CD4-positive, alpha-beta memory T cell (primary cell): ENCODE measurements at regions of chr14 and their contacts with region 1.

Region 1: DNA sequence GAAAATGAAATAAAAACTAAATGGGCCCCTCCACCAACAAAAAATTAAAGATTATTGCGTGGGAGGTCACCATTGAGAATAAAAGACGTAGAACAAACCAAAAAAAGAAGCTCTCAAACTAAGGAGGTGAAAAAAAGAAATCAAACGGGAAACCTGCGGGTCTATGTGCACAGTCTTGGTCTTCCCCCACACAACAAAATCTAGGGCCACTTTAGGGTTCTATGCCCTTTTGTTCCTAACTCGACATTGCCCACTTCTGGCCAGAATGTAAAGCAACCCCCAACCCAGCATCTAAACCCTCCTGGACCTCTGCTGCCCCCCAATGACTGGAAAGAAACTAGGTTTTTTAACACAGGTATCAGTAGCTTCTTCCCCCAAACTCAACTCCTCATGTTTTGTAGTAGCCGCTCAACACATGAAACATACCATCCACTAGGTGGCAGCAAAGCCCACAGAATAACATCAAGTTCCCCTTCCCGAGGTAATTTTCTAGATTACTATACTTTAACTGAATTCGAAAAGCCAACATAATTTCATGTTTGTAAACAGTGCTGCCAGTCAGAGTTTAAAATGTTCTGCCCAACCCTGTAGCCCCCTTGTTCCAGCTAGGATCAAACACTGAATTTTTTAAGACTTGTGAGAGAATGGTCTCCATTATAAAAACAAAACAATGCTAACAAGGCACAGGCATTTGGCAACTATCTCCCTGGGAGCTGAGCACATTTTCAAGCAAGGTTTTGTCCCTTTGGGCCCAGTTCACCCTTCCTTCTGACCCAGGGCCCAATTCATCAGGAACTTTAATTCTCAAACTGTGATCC is 18.7 kb downstream of the DAD1 start:
- DNase-seq: peak; percentile 94 to 97 (median 96)
- H3K4me3 ChIP-seq: peak overlapping the region; percentile 6 to 41
- H3K4me3 Mint-ChIP-seq: peak overlapping the region; percentile 54 to 85 (median 80)
- H3K27ac ChIP-seq: peak overlapping the region; percentile 69
- H3K27ac Mint-ChIP-seq: peak overlapping the region; percentile 95 to 100 (median 98)
- H3K4me1 ChIP-seq: peaks cover 52% of the 10 kb centered on the region
- H3K4me1 Mint-ChIP-seq: peaks cover 38 to 57% (median 46%) of the 10 kb centered on the region in 4 donors
- H3K27me3 ChIP-seq: no peaks in the 10 kb centered on the region
- H3K27me3 Mint-ChIP-seq: no peaks in the 10 kb centered on the region

Region 2: DNA sequence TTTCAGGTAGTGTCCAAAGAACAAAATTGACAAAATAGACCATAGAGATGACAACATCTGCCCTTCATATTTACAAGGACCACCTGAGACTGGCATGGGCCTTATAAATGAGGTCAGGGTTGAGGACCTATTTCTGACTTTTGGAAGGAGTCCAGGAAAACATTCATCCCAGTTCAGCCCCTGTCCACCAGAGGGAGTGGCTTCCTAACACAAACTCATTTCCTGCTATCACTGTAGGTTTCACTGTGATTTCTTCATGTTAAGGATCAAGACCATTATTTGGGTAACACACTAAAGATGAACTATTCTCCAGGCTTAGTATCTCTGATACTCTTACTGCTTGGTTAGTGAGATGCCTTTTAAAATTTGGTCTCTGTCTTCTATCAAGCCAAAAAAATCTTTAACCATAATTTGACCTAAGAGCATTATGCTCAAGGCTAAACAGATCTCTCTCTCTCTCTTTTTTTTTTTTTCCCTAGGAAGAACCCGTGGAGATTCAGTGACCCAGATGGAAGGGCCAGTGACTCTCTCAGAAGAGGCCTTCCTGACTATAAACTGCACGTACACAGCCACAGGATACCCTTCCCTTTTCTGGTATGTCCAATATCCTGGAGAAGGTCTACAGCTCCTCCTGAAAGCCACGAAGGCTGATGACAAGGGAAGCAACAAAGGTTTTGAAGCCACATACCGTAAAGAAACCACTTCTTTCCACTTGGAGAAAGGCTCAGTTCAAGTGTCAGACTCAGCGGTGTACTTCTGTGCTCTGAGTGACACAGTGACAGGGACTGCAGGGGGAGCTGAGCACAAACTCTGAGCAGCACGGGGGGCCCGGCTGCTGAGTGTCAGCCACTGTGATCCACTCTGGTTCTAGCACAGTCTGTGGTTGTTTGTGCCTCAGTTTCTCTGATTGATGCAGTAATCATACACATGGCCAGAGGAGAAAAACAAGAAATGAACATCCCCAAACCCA is 629.2 kb before region 1 on chr14:
- CTCF ChIA-PET with region 1: interaction called, 5 read pairs
- POLR2A ChIA-PET with region 1: no interaction called
- intact Hi-C with region 1: loop called (anchors 1 kb)
- DNase-seq: peak; percentile 44 to 53 (median 47)
- H3K4me3 ChIP-seq: no peak overlapping the region
- H3K4me3 Mint-ChIP-seq: peak overlapping the region; percentile 65 to 86 (median 81)
- H3K27ac ChIP-seq: peak overlapping the region; percentile 26
- H3K27ac Mint-ChIP-seq: peak overlapping the region; percentile 31 to 88 (median 79)
- H3K4me1 ChIP-seq: peaks cover 13% of the 10 kb centered on the region
- H3K4me1 Mint-ChIP-seq: peaks cover 4 to 20% (median 15%) of the 10 kb centered on the region in 4 donors
- H3K27me3 ChIP-seq: no peaks in the 10 kb centered on the region
- H3K27me3 Mint-ChIP-seq: peaks cover 0 to 9% of the 10 kb centered on the region in 2 donors

Region 3: DNA sequence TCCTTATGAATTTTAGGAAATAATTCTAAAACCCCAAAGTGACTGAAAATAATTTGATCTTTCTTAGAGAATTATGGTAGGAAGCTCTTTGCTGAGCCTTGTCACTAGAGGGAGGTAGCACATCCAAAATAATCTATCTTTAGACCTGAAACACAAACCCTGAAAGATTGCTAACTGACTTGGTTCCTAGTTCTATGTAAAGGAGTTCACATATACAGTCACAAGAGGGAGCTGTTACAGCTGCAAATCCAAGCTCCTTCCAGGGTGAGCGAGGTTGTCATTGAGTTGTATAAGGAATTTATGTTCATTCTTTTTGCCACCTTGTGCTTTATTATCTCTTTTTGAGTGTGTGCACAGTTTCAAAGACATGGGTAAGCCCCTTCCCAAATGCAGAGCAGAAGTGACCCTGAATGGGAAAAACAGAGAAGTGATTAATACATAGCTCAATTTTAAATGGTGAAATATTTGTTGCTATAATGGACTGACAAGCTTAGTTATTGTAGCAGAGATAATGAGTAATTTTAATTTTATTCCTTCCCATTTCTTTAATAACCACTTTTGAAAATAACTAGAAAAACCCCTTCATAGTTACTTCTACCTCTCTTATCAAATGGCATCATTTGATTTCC is 369.2 kb before region 1 on chr14:
- CTCF ChIA-PET with region 1: interaction called, 3 read pairs
- POLR2A ChIA-PET with region 1: interaction called, 7 read pairs
- intact Hi-C with region 1: loop called (anchors 1 kb)
- DNase-seq: peak in 4 of 5 donors; percentile 28 to 43 (median 34)
- H3K4me3 ChIP-seq: no peak overlapping the region
- H3K4me3 Mint-ChIP-seq: peak overlapping the region in 2 of 8 donors; percentile 39 to 58
- H3K27ac ChIP-seq: no peak overlapping the region
- H3K27ac Mint-ChIP-seq: peak overlapping the region in 1 of 7 donors; percentile 52
- H3K4me1 ChIP-seq: no peaks in the 10 kb centered on the region
- H3K4me1 Mint-ChIP-seq: peaks cover 0 to 4% (median 1%) of the 10 kb centered on the region in 4 donors
- H3K27me3 ChIP-seq: no peaks in the 10 kb centered on the region
- H3K27me3 Mint-ChIP-seq: no peaks in the 10 kb centered on the region

Region 4: GRCh38 chr14:22536853-22537338 is 33.4 kb before region 1 on chr14:
- CTCF ChIA-PET with region 1: interaction called, 30 read pairs
- POLR2A ChIA-PET with region 1: interaction called, 186 read pairs
- intact Hi-C with region 1: no loop called
- DNase-seq: peak in 4 of 5 donors; percentile 54 to 97 (median 62)
- H3K4me3 ChIP-seq: peak overlapping the region; percentile 13 to 46
- H3K4me3 Mint-ChIP-seq: peak overlapping the region; percentile 69 to 91 (median 85)
- H3K27ac ChIP-seq: peak overlapping the region; percentile 72
- H3K27ac Mint-ChIP-seq: peak overlapping the region; percentile 92 to 100 (median 98)
- H3K4me1 ChIP-seq: peaks cover 99% of the 10 kb centered on the region
- H3K4me1 Mint-ChIP-seq: peaks cover 86 to 100% (median 91%) of the 10 kb centered on the region in 4 donors
- H3K27me3 ChIP-seq: no peaks in the 10 kb centered on the region
- H3K27me3 Mint-ChIP-seq: no peaks in the 10 kb centered on the region

Region 5: DNA sequence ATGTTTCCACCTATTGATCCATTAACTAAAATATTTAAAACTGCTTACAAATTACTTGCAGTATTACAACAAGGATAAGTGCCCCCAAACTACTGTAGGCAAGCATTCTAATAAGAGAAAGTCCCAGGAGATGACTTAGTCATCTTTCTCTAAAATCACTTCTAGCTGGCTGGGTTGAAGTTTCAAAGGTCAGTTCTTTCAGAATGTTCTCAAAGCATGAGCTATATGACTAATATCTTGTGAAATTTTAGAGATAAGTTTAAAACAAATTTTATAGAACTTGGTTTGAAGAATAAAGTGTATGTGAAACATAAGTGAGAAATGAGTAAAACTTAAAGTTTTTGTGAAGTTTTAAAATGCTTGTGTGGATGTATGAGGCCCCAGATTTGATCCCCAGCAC is 98.1 kb after region 1 on chr14:
- CTCF ChIA-PET with region 1: no interaction called
- POLR2A ChIA-PET with region 1: no interaction called
- intact Hi-C with region 1: no loop called
- DNase-seq: no peak
- H3K4me3 ChIP-seq: no peak overlapping the region
- H3K4me3 Mint-ChIP-seq: no peak overlapping the region
- H3K27ac ChIP-seq: no peak overlapping the region
- H3K27ac Mint-ChIP-seq: no peak overlapping the region
- H3K4me1 ChIP-seq: no peaks in the 10 kb centered on the region
- H3K4me1 Mint-ChIP-seq: no peaks in the 10 kb centered on the region
- H3K27me3 ChIP-seq: no peaks in the 10 kb centered on the region
- H3K27me3 Mint-ChIP-seq: no peaks in the 10 kb centered on the region

Region 6: DNA sequence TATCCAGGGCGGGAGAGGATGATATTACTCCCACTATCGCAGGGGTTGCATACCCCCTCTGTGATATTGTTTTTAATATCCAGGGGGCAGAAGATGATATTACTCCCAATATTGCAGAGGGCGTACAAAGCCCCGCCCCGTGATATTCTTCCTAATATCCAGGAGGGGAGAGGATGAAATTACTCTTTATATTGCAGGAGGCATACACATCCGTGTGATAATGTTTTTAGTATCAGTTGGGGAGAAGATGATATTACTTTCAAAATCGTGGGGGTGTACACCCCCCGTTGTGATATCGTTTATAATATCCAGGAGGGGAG is 143.2 kb after region 1 on chr14:
- CTCF ChIA-PET with region 1: interaction called, 7 read pairs
- POLR2A ChIA-PET with region 1: no interaction called
- intact Hi-C with region 1: loop called (anchors 1 kb)
- DNase-seq: no peak
- H3K4me3 ChIP-seq: peak overlapping the region in 1 of 2 donors; percentile 28
- H3K4me3 Mint-ChIP-seq: peak overlapping the region; percentile 81 to 92 (median 86)
- H3K27ac ChIP-seq: no peak overlapping the region
- H3K27ac Mint-ChIP-seq: peak overlapping the region in 3 of 7 donors; percentile 48 to 94 (median 81)
- H3K4me1 ChIP-seq: no peaks in the 10 kb centered on the region
- H3K4me1 Mint-ChIP-seq: peaks cover 5 to 13% (median 10%) of the 10 kb centered on the region in 4 donors
- H3K27me3 ChIP-seq: no peaks in the 10 kb centered on the region
- H3K27me3 Mint-ChIP-seq: peaks cover 13 to 31% of the 10 kb centered on the region in 2 donors

Region 7: DNA sequence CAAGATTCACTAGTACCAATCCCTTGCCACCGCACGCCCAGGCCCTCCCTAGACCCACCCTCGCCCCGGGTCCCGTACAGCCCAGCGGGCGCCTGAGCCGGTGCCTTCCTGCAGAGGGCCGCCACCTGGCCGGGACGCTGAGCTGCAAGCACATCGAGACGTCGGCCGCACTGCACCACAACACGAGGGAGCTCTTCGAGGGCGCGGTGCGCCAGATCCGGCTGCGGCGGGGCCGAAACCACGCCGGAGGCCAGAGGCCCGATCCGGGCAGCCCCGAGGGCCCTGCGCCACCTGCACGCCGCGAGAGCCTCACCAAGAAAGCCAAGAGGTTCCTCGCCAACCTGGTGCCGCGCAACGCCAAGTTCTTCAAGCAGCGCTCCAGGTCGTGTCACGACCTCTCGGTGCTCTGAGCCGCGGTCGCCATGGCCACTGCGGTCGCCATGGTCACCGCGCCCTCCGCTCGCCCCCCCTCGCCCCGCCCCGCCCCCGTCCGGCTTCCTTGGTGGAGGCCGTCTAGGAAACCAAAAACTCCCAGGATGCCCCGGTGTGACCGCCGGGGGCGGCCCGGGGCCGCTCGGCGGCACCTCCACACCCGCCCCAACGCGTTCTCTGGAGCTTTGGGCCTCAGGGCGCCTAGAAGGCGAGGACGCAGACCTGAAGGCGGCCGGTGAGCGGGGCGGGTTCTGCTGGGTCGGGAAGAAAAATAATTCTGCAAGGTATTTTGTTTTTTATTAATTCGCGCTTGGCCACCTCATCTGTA is 316.3 kb after region 1 on chr14:
- CTCF ChIA-PET with region 1: interaction called, 11 read pairs
- POLR2A ChIA-PET with region 1: interaction called, 8 read pairs
- intact Hi-C with region 1: no loop called
- DNase-seq: peak; percentile 73 to 85 (median 78)
- H3K4me3 ChIP-seq: peak overlapping the region; percentile 24 to 30
- H3K4me3 Mint-ChIP-seq: peak overlapping the region; percentile 87 to 97 (median 94)
- H3K27ac ChIP-seq: peak overlapping the region; percentile 68
- H3K27ac Mint-ChIP-seq: peak overlapping the region; percentile 93 to 99 (median 97)
- H3K4me1 ChIP-seq: peaks cover 57% of the 10 kb centered on the region
- H3K4me1 Mint-ChIP-seq: peaks cover 34 to 85% (median 59%) of the 10 kb centered on the region in 4 donors
- H3K27me3 ChIP-seq: no peaks in the 10 kb centered on the region
- H3K27me3 Mint-ChIP-seq: no peaks in the 10 kb centered on the region